ENCODE measurements at regions of chr1 and their contacts with region 1.

Region 1: DNA sequence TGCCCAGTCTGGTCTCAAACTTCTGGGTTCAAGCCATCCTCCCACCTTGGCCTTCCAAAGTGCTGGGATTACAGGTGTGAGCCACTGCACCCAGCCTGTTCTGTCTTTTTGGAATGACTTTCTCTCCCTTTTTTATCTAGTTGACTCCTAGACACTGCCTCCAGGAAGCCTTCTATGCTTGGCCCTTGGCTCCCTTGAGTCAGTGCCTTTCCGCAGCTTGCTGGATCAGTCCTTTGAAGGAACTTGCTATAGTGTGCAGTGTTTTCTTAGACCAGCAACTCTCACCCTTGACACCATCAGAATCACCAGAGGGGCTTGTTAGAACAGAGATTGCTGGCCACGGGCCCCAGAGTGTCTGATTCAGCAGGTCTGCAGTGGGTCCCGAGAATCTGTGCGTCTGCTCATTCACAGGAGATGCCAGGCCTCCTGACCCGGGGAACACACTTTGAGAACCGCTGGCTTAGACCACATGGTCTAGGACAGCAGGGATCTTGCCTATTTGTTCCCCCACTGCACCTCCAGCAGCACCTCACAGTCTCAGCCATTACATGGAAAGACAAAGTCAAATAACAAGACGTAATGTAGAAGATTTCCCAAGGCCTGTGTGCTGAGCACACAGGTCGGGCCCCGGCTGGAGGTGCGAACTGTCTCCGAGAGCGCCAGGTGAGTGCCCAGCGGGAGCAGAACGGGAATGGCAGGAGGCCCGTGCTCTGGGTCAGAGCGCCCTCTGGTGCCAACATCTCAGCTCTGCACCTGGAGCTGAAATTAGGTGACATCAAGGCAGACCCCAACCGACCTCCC is 27.4 kb upstream of the CTPS1 start:
- DNase-seq: peak; percentile 84 to 88 (median 86)
- ATAC-seq: peak; percentile 82
- H3K4me3 ChIP-seq: no peak overlapping the region
- H3K27ac ChIP-seq: no peak overlapping the region
- H3K4me1 ChIP-seq: peaks cover 17% of the 10 kb centered on the region
- H3K27me3 ChIP-seq: no peaks in the 10 kb centered on the region
- CTCF ChIP-seq: peak; percentile 85 to 97 (median 96)
- POLR2A ChIP-seq: no peak

Region 2: GRCh38 chr1:40849801-40850592 is 102.1 kb before region 1 on chr1:
- intact Hi-C with region 1: loop called (anchors 5 kb)
- DNase-seq: peak; percentile 72 to 81 (median 75)
- ATAC-seq: peak; percentile 78
- H3K4me3 ChIP-seq: no peak overlapping the region
- H3K27ac ChIP-seq: peak overlapping the region in 2 of 4 donors; percentile 8 to 25
- H3K4me1 ChIP-seq: peaks cover 20% of the 10 kb centered on the region
- H3K27me3 ChIP-seq: no peaks in the 10 kb centered on the region
- CTCF ChIP-seq: peak; percentile 81 to 92 (median 86)
- POLR2A ChIP-seq: no peak